ENCODE measurements at regions of chr10 and their contacts with region 1.

Region 1: GRCh38 chr10:5573968-5574641 is 49.3 kb downstream of the CALML3 start:
- DNase-seq: no peak
- ATAC-seq: no peak
- H3K4me3 ChIP-seq: no peak overlapping the region
- H3K4me3 Mint-ChIP-seq: no peak overlapping the region
- H3K27ac ChIP-seq: no peak overlapping the region
- H3K27ac Mint-ChIP-seq: no peak overlapping the region
- H3K4me1 ChIP-seq: no peaks in the 10 kb centered on the region
- H3K4me1 Mint-ChIP-seq: no peaks in the 10 kb centered on the region
- H3K27me3 ChIP-seq: no peaks in the 10 kb centered on the region
- H3K27me3 Mint-ChIP-seq: no peaks in the 10 kb centered on the region
- CTCF ChIP-seq: no peak

Region 2: DNA sequence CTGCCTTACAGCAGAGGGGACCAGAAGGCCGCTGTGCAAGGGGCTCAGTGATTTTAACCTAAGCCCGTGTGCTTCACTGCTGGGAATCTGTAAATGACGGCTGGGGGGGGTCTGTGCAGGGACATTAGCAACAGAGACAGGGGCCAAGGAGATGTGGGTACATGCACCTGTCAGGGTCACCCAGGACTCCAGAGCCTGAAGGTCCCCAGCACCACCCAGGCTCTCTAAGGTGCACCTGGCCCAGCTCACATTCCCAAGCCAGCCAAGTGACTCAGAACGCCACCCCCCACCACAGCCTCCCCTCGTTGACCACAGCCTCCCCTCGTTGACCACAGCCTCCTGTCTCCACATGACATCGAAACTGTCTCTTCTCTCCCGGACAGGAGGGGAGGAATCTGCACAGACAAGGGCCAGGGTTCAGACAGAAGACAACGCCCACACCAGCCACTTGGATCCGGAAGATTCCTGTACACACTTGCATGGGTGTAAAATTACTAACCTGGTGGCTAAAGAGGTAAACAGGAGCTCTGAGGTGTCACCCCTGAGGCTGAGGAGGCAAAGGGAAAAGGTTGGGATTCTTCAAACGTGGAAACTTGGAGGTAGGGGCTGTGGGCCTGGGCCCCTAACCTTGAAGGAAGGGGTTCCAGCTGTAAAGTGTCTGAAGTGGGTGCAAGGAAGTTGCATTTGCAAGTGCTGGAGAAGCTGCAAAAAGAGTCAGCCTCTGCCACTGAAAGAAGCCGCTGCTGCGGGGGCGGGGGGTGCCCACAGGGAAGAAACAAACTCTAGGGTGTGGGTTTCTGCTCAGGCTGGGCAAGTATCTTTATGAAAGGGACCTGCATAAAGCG is 22.4 kb before region 1 on chr10:
- CTCF ChIA-PET with region 1: no interaction called
- POLR2A ChIA-PET with region 1: no interaction called
- intact Hi-C with region 1: loop called in 1 of 2 experiments (anchors 1 kb)
- DNase-seq: peak in 8 of 9 experiments; percentile 14 to 58 (median 26)
- ATAC-seq: no peak
- H3K4me3 ChIP-seq: no peak overlapping the region
- H3K4me3 Mint-ChIP-seq: peak overlapping the region; percentile 35
- H3K27ac ChIP-seq: no peak overlapping the region
- H3K27ac Mint-ChIP-seq: peak overlapping the region; percentile 62
- H3K4me1 ChIP-seq: peaks cover 43% of the 10 kb centered on the region
- H3K4me1 Mint-ChIP-seq: peaks cover 26% of the 10 kb centered on the region
- H3K27me3 ChIP-seq: no peaks in the 10 kb centered on the region
- H3K27me3 Mint-ChIP-seq: no peaks in the 10 kb centered on the region
- CTCF ChIP-seq: no peak

Measured in CD8-positive, alpha-beta T cell (primary cell).